ENCODE measurements at regions of chr10 and their contacts with region 1.

Region 1: GRCh38 chr10:21888959-21889358 is 114.6 kb downstream of the DNAJC1 start:
- DNase-seq: no peak
- H3K4me3 ChIP-seq: no peak overlapping the region
- H3K27ac ChIP-seq: no peak overlapping the region
- H3K4me1 ChIP-seq: no peaks in the 10 kb centered on the region
- H3K27me3 ChIP-seq: no peaks in the 10 kb centered on the region
- CTCF ChIP-seq: no peak

Region 2: DNA sequence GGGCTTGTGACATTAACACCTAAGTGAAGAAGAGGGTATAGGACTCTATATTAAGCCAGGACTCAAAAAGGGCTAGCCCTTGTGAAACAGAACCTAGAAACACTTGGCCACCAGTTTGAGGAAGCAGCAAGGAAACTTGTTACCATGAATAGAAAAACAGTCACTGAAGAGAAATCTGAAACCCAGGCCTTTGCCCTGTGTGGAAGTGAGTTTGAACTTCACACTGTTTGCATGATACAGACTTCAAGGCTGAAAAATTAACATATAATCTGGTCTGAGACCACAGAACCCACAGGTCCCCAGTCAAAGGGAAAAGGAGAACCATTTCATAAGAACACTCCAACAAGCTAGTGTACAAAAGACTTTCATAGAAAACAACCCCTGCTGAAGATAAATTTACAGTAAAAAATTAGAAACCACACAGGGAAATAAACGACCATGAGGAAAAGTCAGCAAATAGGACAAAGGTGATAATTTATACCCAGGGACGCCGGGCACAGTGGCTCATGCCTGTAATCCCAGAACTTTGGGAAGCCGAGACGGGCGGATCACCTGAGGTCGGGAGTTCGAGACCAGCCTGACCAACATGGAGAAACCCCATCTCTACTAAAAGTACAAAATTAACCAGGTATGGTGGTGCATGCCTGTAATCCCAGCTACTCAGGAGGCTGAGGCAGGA is 439.5 kb before region 1 on chr10:
- CTCF ChIA-PET with region 1: no interaction called
- dilution Hi-C with region 1: no loop called
- in situ Hi-C with region 1: no loop called
- intact Hi-C with region 1: no loop called
- DNase-seq: no peak
- H3K4me3 ChIP-seq: no peak overlapping the region
- H3K27ac ChIP-seq: no peak overlapping the region
- H3K4me1 ChIP-seq: no peaks in the 10 kb centered on the region
- H3K27me3 ChIP-seq: no peaks in the 10 kb centered on the region
- CTCF ChIP-seq: no peak

Region 3: DNA sequence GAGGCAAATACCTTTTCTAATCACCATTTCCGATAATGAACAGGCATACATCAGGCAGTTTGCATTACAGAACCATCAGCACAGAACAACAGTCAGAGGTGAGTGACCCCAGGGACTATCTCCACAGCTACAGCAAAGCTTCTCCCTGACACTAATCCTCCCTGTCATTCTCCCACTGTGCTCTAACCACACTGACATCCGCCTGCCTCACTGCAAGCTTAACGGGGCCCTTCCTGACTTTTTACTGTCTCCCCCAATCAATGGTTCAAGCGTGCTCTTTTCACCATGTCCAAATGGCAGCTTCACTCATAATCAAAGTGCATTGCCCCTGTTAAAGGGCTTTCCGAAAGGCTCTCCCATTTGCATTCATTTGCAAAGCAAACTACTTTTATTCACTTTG is 81.8 kb before region 1 on chr10:
- CTCF ChIA-PET with region 1: no interaction called
- dilution Hi-C with region 1: loop called (anchors 5 kb)
- in situ Hi-C with region 1: no loop called
- intact Hi-C with region 1: no loop called
- DNase-seq: no peak
- H3K4me3 ChIP-seq: no peak overlapping the region
- H3K27ac ChIP-seq: no peak overlapping the region
- H3K4me1 ChIP-seq: peaks cover 21% of the 10 kb centered on the region
- H3K27me3 ChIP-seq: no peaks in the 10 kb centered on the region
- CTCF ChIP-seq: no peak